Mammary epithelial cell (primary cell): ENCODE measurements at regions of chr19 and their contacts with region 1.

Region 1: DNA sequence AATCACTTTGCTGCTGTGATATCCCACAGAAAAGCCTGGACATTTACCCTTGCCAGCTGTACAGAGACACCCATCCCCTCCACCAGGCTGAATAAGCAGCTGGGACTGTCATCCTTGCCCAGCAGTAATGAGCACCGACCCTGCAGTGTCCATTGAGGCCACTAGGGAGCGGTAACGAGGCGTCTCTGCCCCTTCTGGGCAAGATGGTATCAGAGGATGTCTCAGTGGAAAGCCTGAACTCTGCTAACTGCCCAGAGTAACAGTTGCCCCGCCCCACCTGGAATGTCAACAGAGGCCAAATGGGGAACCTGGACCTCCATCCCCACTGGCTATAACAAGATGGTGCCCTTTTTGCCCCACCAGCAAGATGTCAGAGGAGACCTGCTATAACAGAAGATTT is 22.8 kb upstream of the CEACAM20 start:
- DNase-seq: peak; percentile 45
- H3K4me3 ChIP-seq: no peak overlapping the region
- H3K27ac ChIP-seq: no peak overlapping the region
- H3K4me1 ChIP-seq: peaks cover 34% of the 10 kb centered on the region
- H3K27me3 ChIP-seq: no peaks in the 10 kb centered on the region
- CTCF ChIP-seq: peak; percentile 77 to 89

Region 2: GRCh38 chr19:44447916-44448674 is 104.2 kb before region 1 on chr19 and contains the start of gene ZNF229:
- CTCF ChIA-PET with region 1: no interaction called
- dilution Hi-C with region 1: no loop called
- in situ Hi-C with region 1: no loop called
- intact Hi-C with region 1: no loop called
- DNase-seq: peak; percentile 93
- H3K4me3 ChIP-seq: peak within 1 kb of the TSS; percentile 73 to 85 (median 81)
- H3K27ac ChIP-seq: peak within 1 kb of the TSS; percentile 47
- H3K4me1 ChIP-seq: peaks cover 7% of the 10 kb centered on the region
- H3K27me3 ChIP-seq: no peaks in the 10 kb centered on the region
- CTCF ChIP-seq: no peak
- total RNA-seq, gene ZNF229: 10.3 to 16.8 TPM

Region 3: GRCh38 chr19:44512326-44513298 is 39.7 kb before region 1 on chr19:
- CTCF ChIA-PET with region 1: no interaction called
- dilution Hi-C with region 1: no loop called
- in situ Hi-C with region 1: no loop called
- intact Hi-C with region 1: loop called (anchors 2 kb)
- DNase-seq: peak; percentile 61
- H3K4me3 ChIP-seq: no peak overlapping the region
- H3K27ac ChIP-seq: no peak overlapping the region
- H3K4me1 ChIP-seq: no peaks in the 10 kb centered on the region
- H3K27me3 ChIP-seq: peaks cover 5% of the 10 kb centered on the region
- CTCF ChIP-seq: peak; percentile 69 to 89

Region 4: DNA sequence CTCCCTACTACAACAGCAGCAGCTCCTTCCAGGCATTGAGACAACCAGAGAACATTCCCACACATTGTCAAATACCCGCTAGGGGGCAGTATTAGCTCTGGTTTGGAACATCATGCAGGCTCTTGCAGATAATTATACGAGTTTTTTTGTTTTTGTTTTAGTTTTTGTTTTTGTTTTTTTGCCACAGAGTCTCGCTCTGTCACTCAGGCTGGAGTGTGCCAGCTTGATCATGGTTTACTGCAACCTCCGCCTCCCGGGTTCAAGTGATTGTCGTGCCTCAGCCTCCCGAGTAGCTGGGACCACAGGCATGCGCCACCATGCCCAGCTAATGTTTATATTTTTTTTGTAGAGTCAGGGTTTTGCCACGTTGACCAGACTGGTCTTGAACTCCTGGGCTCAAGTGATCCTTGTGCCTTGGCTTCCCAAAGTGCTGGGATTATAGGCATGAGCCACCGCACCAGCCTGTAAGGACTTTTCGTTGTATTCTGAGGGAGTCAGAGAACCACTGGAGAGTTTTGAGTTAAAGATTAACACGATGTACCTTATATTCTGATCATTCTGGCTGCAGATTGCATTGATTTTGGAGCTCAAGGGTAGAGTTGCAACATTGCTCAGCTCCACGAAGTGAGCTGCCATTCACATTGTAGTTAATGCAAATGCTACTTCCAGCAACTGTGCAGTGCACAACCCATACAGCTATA is 18.8 kb after region 1 on chr19:
- CTCF ChIA-PET with region 1: no interaction called
- dilution Hi-C with region 1: no loop called
- in situ Hi-C with region 1: no loop called
- intact Hi-C with region 1: loop called (anchors 1 kb)
- DNase-seq: peak; percentile 55
- H3K4me3 ChIP-seq: no peak overlapping the region
- H3K27ac ChIP-seq: no peak overlapping the region
- H3K4me1 ChIP-seq: no peaks in the 10 kb centered on the region
- H3K27me3 ChIP-seq: no peaks in the 10 kb centered on the region
- CTCF ChIP-seq: peak; percentile 71 to 75

Region 5: GRCh38 chr19:44582581-44583265 is 30.4 kb after region 1 on chr19:
- CTCF ChIA-PET with region 1: no interaction called
- dilution Hi-C with region 1: loop called (anchors 5 kb)
- in situ Hi-C with region 1: no loop called
- intact Hi-C with region 1: loop called (anchors 1 kb)
- DNase-seq: no peak
- H3K4me3 ChIP-seq: no peak overlapping the region
- H3K27ac ChIP-seq: no peak overlapping the region
- H3K4me1 ChIP-seq: peaks cover 3% of the 10 kb centered on the region
- H3K27me3 ChIP-seq: no peaks in the 10 kb centered on the region
- CTCF ChIP-seq: peak; percentile 78 to 82

Region 6: DNA sequence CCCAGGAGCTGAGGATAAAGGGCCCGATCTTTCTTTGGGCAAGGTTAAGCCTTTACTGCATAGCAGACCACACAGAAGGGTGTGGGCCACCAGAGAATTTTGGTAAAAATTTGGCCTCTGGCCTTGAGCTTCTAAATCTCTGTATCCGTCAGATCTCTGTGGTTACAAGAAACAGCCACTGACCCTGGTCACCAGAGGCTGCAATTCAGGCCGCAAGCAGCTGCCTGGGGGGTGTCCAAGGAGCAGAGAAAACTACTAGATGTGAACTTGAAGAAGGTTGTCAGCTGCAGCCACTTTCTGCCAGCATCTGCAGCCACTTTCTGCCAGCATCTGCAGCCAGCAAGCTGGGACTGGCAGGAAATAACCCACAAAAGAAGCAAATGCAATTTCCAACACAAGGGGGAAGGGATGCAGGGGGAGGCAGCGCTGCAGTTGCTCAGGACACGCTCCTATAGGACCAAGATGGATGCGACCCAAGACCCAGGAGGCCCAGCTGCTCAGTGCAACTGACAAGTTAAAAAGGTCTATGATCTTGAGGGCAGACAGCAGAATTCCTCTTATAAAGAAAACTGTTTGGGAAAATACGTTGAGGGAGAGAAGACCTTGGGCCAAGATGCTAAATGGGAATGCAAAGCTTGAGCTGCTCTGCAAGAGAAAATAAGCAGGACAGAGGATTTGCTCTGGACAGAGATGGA is 110.5 kb after region 1 on chr19:
- CTCF ChIA-PET with region 1: no interaction called
- dilution Hi-C with region 1: loop called (anchors 5 kb)
- in situ Hi-C with region 1: no loop called
- intact Hi-C with region 1: no loop called
- DNase-seq: no peak
- H3K4me3 ChIP-seq: no peak overlapping the region
- H3K27ac ChIP-seq: no peak overlapping the region
- H3K4me1 ChIP-seq: no peaks in the 10 kb centered on the region
- H3K27me3 ChIP-seq: no peaks in the 10 kb centered on the region
- CTCF ChIP-seq: no peak